B cell (primary cell): ENCODE measurements at regions of chr1 and their contacts with region 1.

Region 1: GRCh38 chr1:82775402-82776000 is 974.8 kb downstream of the ADGRL2 start:
- DNase-seq: peak; percentile 6
- ATAC-seq: no peak
- H3K4me3 ChIP-seq: no peak overlapping the region
- H3K4me3 Mint-ChIP-seq: no peak overlapping the region
- H3K27ac ChIP-seq: no peak overlapping the region
- H3K27ac Mint-ChIP-seq: no peak overlapping the region
- H3K4me1 ChIP-seq: no peaks in the 10 kb centered on the region
- H3K4me1 Mint-ChIP-seq: no peaks in the 10 kb centered on the region
- H3K27me3 ChIP-seq: no peaks in the 10 kb centered on the region
- H3K27me3 Mint-ChIP-seq: no peaks in the 10 kb centered on the region
- CTCF ChIP-seq: no peak

Region 2: DNA sequence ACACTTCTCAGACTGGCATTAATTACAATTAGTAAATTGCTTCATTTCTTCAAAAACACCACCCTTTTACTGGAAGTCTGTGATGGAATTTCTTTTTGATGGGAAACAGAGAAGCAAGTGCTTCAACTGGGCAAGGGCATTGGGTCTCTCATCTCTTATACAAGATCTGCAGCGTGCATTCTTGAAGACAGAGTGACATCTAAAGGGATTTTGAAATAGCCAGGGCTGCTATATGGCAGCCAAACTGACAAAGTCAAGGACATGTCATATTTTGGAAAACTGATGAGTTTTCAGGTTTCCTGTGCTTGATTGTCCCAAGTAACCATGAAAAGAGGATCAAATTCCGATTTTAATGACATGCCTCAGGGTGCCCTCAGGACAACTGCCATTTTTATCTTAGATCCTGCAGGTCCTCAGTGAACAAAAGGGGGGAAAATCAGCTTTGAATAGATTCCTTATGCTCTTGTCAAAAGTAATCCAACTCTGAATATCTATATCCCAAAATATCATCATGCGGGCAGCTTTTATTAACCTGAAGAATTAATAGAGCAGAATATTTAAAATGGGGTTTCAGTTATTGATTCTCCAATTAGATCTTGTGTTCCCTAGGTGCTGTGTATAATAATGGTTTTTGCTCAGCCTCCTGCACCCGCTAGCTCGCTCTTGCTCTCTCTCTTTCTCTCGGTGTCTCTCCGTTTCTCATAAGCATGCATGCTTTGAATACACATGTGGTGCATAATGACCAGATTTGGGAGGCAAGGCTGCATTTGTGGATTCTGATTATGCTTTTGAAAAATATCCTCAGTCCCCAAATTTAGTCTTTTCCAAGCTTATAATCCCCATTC is 1001.6 kb after region 1 on chr1:
- CTCF ChIA-PET with region 1: no interaction called
- POLR2A ChIA-PET with region 1: no interaction called
- intact Hi-C with region 1: loop called (anchors 5 kb)
- DNase-seq: no peak
- ATAC-seq: no peak
- H3K4me3 ChIP-seq: no peak overlapping the region
- H3K4me3 Mint-ChIP-seq: no peak overlapping the region
- H3K27ac ChIP-seq: no peak overlapping the region
- H3K27ac Mint-ChIP-seq: no peak overlapping the region
- H3K4me1 ChIP-seq: no peaks in the 10 kb centered on the region
- H3K4me1 Mint-ChIP-seq: no peaks in the 10 kb centered on the region
- H3K27me3 ChIP-seq: no peaks in the 10 kb centered on the region
- H3K27me3 Mint-ChIP-seq: no peaks in the 10 kb centered on the region
- CTCF ChIP-seq: no peak